ENCODE measurements at regions of chr1 and their contacts with region 1.

Region 1: DNA sequence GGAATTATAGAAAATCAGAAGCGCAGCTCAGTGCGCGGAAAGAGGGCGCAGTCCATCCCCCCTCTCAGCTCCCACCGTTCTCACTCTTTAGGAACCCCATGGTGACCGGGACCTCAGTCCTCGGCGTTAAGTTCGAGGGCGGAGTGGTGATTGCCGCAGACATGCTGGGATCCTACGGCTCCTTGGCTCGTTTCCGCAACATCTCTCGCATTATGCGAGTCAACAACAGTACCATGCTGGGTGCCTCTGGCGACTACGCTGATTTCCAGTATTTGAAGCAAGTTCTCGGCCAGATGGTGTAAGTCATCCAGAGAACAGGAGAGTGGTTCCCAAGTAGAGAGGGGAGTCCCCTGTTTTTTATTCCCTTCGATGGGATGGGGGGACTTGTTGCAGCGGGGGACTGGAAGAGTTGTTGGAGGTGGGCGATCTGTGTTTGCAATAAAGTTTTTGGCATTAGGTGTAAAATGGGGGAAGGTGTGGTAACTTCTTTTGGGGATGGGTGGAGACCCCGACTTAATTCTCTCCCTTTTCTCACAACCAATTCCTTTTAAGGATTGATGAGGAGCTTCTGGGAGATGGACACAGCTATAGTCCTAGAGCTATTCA is 620 bp downstream of the PSMB4 start:
- DNase-seq: no peak
- H3K4me3 ChIP-seq: peak overlapping the region; percentile 88 to 99 (median 96)
- H3K27ac ChIP-seq: peak overlapping the region; percentile 85
- H3K4me1 ChIP-seq: peaks cover 0 to 4% (median under 1%) of the 10 kb centered on the region in 4 experiments; a peak in 3 of 7 replicates
- H3K27me3 ChIP-seq: no peaks in the 10 kb centered on the region
- CTCF ChIP-seq: no peak
- EP300 ChIP-seq: no peak
- POLR2A ChIP-seq: no peak
- RAD21 ChIP-seq: no peak

Region 2: GRCh38 chr1:151047925-151048645 is 351.9 kb before region 1 on chr1:
- CTCF ChIA-PET with region 1: no interaction called
- POLR2A ChIA-PET with region 1: no interaction called
- DNase-seq: peak in 1 of 2 experiments; percentile 85
- H3K4me3 ChIP-seq: peak overlapping the region; percentile 70 to 96 (median 84)
- H3K27ac ChIP-seq: peak overlapping the region; percentile 60
- H3K4me1 ChIP-seq: peaks cover 0 to 7% (median 3%) of the 10 kb centered on the region in 4 experiments; a peak in 4 of 7 replicates
- H3K27me3 ChIP-seq: no peaks in the 10 kb centered on the region
- CTCF ChIP-seq: peak; percentile 73 to 84 (median 82)
- EP300 ChIP-seq: no peak
- POLR2A ChIP-seq: peak; percentile 53 to 79
- RAD21 ChIP-seq: peak in 1 of 2 experiments; percentile 23; a peak in 2 of 4 replicates

Region 3: DNA sequence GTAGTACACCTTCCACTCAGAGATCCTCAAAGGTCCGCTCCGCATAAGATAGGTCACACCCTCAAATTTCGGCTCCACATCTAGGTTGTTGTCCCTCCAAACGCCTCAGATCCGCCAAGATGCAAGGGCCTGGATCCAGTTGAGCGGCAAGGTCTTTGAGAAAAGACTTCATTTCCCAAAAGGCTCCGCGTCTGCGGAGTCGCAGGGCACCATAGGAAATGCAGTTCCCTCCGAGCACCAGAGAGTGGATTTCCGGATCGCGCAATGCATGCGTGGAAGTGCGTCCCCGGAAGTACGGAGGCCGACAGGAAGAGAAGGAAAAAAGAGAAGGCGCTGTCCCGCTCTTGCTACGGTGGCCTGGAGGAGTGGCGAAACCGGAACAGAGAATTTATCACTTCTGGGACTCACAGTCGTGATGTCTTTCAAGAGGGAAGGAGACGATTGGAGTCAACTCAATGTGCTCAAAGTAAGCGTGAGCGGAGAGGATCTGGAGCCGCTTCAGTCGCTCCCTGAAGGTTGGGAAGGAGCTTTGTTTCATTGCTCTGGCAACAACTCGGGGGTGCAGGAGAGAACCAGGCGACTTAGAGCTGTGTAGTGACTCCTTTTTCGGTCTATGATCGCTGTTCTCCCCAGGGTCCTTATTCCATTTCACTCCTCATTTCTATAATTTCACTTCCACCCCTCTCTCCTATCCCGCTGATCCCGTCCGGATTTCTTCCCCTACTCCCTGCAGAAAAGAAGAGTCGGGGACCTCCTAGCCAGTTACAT is 234.1 kb before region 1 on chr1 and contains the starts of genes LYSMD1 and SCNM1:
- CTCF ChIA-PET with region 1: no interaction called
- POLR2A ChIA-PET with region 1: no interaction called
- DNase-seq: peak; percentile 90 to 93
- H3K4me3 ChIP-seq: peak within 1 kb of the TSS; percentile 80 to 99 (median 95)
- H3K27ac ChIP-seq: peak within 1 kb of the TSS; percentile 42
- H3K4me1 ChIP-seq: peaks cover 5 to 10% (median 5%) of the 10 kb centered on the region in 4 experiments
- H3K27me3 ChIP-seq: no peaks in the 10 kb centered on the region
- CTCF ChIP-seq: no peak
- EP300 ChIP-seq: peak in 1 of 2 experiments; percentile 71; a peak in 1 of 3 replicates
- POLR2A ChIP-seq: peak in 1 of 2 experiments; percentile 43; a peak in 1 of 3 replicates
- RAD21 ChIP-seq: no peak
- total RNA-seq, gene LYSMD1: 4.9 and 6.0 TPM in 2 replicates
- total RNA-seq, gene SCNM1: 44.5 and 46.2 TPM in 2 replicates

Region 4: DNA sequence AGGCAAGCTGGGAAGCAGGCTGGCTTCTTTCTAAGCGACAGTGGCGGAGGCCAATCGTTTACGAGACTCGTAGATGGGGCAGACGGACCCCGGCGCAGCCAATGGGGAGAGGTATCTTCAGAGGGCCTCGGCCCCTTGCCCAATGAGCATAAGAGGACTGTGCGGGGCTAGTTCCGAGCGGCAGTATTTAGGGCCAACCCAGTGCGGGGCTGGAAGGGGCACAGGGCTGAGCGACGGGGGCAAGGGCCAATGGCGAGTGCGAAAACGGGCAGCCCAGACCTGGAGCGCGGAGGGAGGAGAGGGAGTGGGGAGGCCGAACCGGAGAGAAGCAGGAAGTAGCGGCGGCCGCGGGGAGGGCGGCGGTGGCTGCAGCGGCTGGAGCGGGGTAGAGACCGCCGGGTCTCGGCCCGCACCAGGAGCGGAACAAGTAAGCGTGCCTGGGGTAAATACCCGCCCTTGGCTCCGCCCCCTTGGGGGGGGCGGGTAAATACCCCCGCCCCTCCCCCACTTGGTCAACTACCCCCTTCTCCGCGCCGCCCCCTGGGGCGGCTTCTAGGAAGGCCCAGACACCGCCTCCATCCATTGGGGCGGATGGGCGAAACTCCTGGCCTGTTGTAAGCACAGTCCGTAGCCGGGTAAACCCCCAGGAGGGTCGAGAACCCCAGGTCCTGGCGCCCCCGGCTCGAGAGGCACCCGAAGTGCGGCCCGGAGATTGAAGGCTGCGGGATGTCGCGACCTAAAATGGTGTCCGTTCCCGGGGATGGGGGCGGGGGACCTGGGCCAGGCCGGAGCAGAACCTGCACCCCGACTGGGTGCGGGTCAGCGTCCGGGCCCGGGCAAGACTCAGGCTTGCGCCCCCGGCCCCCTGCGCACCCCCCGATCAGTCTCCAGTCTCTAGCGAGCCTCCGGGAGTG is 117.8 kb before region 1 on chr1 and contains the start of gene ZNF687:
- CTCF ChIA-PET with region 1: no interaction called
- POLR2A ChIA-PET with region 1: interaction called, 10 read pairs
- DNase-seq: peak; percentile 98 to 100
- H3K4me3 ChIP-seq: peak within 1 kb of the TSS; percentile 77 to 96 (median 86)
- H3K27ac ChIP-seq: peak within 1 kb of the TSS; percentile 99
- H3K4me1 ChIP-seq: peaks cover 5 to 9% (median 7%) of the 10 kb centered on the region in 4 experiments; a peak in 5 of 7 replicates
- H3K27me3 ChIP-seq: no peaks in the 10 kb centered on the region
- CTCF ChIP-seq: no peak
- EP300 ChIP-seq: no peak
- POLR2A ChIP-seq: no peak; a peak in 1 of 3 replicates
- RAD21 ChIP-seq: no peak
- total RNA-seq, gene ZNF687: 43.0 and 45.9 TPM in 2 replicates

Region 5: GRCh38 chr1:151327223-151327902 is 72.6 kb before region 1 on chr1 and contains the start of gene PI4KB:
- CTCF ChIA-PET with region 1: interaction called, 3 read pairs
- POLR2A ChIA-PET with region 1: interaction called, 24 read pairs
- DNase-seq: peak; percentile 87 to 88
- H3K4me3 ChIP-seq: peak within 1 kb of the TSS; percentile 67 to 87 (median 79)
- H3K27ac ChIP-seq: peak within 1 kb of the TSS; percentile 90
- H3K4me1 ChIP-seq: peaks cover 2 to 8% (median 5%) of the 10 kb centered on the region in 4 experiments; a peak in 5 of 7 replicates
- H3K27me3 ChIP-seq: no peaks in the 10 kb centered on the region
- CTCF ChIP-seq: no peak
- EP300 ChIP-seq: no peak
- POLR2A ChIP-seq: peak; percentile 67 to 82
- RAD21 ChIP-seq: no peak
- total RNA-seq, gene PI4KB: 30.1 and 31.0 TPM in 2 replicates

Region 6: GRCh38 chr1:151346769-151347522 is 53.0 kb before region 1 on chr1 and contains the start of gene RFX5:
- CTCF ChIA-PET with region 1: no interaction called
- POLR2A ChIA-PET with region 1: interaction called, 25 read pairs
- DNase-seq: peak; percentile 89 to 98
- H3K4me3 ChIP-seq: peak within 1 kb of the TSS; percentile 61 to 76 (median 66)
- H3K27ac ChIP-seq: peak within 1 kb of the TSS; percentile 99
- H3K4me1 ChIP-seq: peaks cover 4 to 14% (median 12%) of the 10 kb centered on the region in 4 experiments; a peak in 5 of 7 replicates
- H3K27me3 ChIP-seq: no peaks in the 10 kb centered on the region
- CTCF ChIP-seq: no peak
- EP300 ChIP-seq: peak; percentile 74 to 97
- POLR2A ChIP-seq: peak; percentile 70 to 82
- RAD21 ChIP-seq: peak in 1 of 2 experiments; percentile 0; a peak in 1 of 4 replicates
- total RNA-seq, gene RFX5: 57.6 and 59.7 TPM in 2 replicates

Region 7: GRCh38 chr1:151377150-151377884 is 22.7 kb before region 1 on chr1:
- CTCF ChIA-PET with region 1: interaction called, 10 read pairs
- POLR2A ChIA-PET with region 1: interaction called, 12 read pairs
- DNase-seq: no peak
- H3K4me3 ChIP-seq: no peak overlapping the region
- H3K27ac ChIP-seq: no peak overlapping the region
- H3K4me1 ChIP-seq: peaks cover 0 to 4% (median 2%) of the 10 kb centered on the region in 4 experiments; a peak in 2 of 7 replicates
- H3K27me3 ChIP-seq: no peaks in the 10 kb centered on the region
- CTCF ChIP-seq: no peak
- EP300 ChIP-seq: no peak
- POLR2A ChIP-seq: no peak
- RAD21 ChIP-seq: no peak

Region 8: GRCh38 chr1:151416231-151416904 is 16.4 kb after region 1 on chr1:
- CTCF ChIA-PET with region 1: interaction called, 5 read pairs
- POLR2A ChIA-PET with region 1: interaction called, 42 read pairs
- DNase-seq: peak in 1 of 2 experiments; percentile 29
- H3K4me3 ChIP-seq: no peak overlapping the region
- H3K27ac ChIP-seq: no peak overlapping the region
- H3K4me1 ChIP-seq: no peaks in the 10 kb centered on the region
- H3K27me3 ChIP-seq: no peaks in the 10 kb centered on the region
- CTCF ChIP-seq: no peak
- EP300 ChIP-seq: no peak
- POLR2A ChIP-seq: no peak
- RAD21 ChIP-seq: no peak

Region 9: GRCh38 chr1:151485685-151486255 is 85.8 kb after region 1 on chr1:
- CTCF ChIA-PET with region 1: no interaction called
- POLR2A ChIA-PET with region 1: no interaction called
- DNase-seq: no peak
- H3K4me3 ChIP-seq: no peak overlapping the region
- H3K27ac ChIP-seq: no peak overlapping the region
- H3K4me1 ChIP-seq: no peaks in the 10 kb centered on the region
- H3K27me3 ChIP-seq: no peaks in the 10 kb centered on the region
- CTCF ChIP-seq: peak; percentile 39 to 54 (median 46)
- EP300 ChIP-seq: no peak
- POLR2A ChIP-seq: no peak
- RAD21 ChIP-seq: peak; percentile 30 to 62; a peak in 3 of 4 replicates